ENCODE measurements at regions of chr7 and their contacts with region 1.

Region 1: GRCh38 chr7:88090671-88091070 is 129.2 kb downstream of the SRI start:
- DNase-seq: no peak
- ATAC-seq: no peak
- H3K4me3 ChIP-seq: no peak overlapping the region
- H3K27ac ChIP-seq: no peak overlapping the region
- H3K4me1 ChIP-seq: no peaks in the 10 kb centered on the region
- H3K27me3 ChIP-seq: no peaks in the 10 kb centered on the region
- CTCF ChIP-seq: no peak
- POLR2A ChIP-seq: no peak
- RAD21 ChIP-seq: no peak

Region 2: GRCh38 chr7:88151119-88151790 is 60.6 kb after region 1 on chr7:
- CTCF ChIA-PET with region 1: no interaction called
- POLR2A ChIA-PET with region 1: no interaction called
- dilution Hi-C with region 1: no loop called
- in situ Hi-C with region 1: no loop called
- intact Hi-C with region 1: loop called (anchors 10 kb)
- DNase-seq: no peak
- ATAC-seq: no peak
- H3K4me3 ChIP-seq: no peak overlapping the region
- H3K27ac ChIP-seq: no peak overlapping the region
- H3K4me1 ChIP-seq: no peaks in the 10 kb centered on the region
- H3K27me3 ChIP-seq: no peaks in the 10 kb centered on the region
- CTCF ChIP-seq: no peak
- POLR2A ChIP-seq: no peak
- RAD21 ChIP-seq: no peak

Region 3: DNA sequence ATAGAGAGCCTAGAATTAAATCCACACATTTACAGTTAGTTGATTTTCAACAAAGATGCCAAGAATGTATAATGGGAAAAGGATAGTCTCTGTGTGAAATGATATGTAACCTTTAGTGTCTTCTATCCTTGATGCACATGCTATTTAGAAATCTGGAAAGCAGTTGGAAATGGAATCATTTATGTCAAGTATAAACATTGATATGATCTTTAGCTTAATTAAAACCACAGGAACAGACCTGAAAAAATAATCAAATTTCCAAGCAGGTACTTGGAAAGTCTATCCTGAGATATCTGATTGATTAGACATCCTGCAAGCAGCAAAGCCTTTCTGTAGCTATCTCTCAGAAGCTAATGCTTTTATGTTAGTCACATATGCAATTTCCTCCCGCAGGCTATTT is 153.6 kb after region 1 on chr7:
- CTCF ChIA-PET with region 1: no interaction called
- POLR2A ChIA-PET with region 1: no interaction called
- dilution Hi-C with region 1: no loop called
- in situ Hi-C with region 1: no loop called
- intact Hi-C with region 1: no loop called
- DNase-seq: no peak
- ATAC-seq: no peak
- H3K4me3 ChIP-seq: no peak overlapping the region
- H3K27ac ChIP-seq: no peak overlapping the region
- H3K4me1 ChIP-seq: no peaks in the 10 kb centered on the region
- H3K27me3 ChIP-seq: no peaks in the 10 kb centered on the region
- CTCF ChIP-seq: no peak
- POLR2A ChIP-seq: no peak
- RAD21 ChIP-seq: no peak

Measured in IMR-90 (cell line).